A549 (cell line): ENCODE measurements at regions of chr3 and their contacts with region 1.

Region 1: GRCh38 chr3:182683453-182683852 is 109.9 kb upstream of the ATP11B start:
- DNase-seq: peak; percentile 63 to 65
- ATAC-seq: peak; percentile 78 to 88
- H3K4me3 ChIP-seq: peak overlapping the region; percentile 52; the same call in 2 of the 3 replicates
- H3K27ac ChIP-seq: no peak overlapping the region
- H3K4me1 ChIP-seq: peaks cover 4% of the 10 kb centered on the region; the same call in 1 of the 3 replicates
- CTCF ChIP-seq: peak; percentile 81
- EP300 ChIP-seq: no peak
- POLR2A ChIP-seq: no peak
- RAD21 ChIP-seq: peak; percentile 87 to 89

Region 2: DNA sequence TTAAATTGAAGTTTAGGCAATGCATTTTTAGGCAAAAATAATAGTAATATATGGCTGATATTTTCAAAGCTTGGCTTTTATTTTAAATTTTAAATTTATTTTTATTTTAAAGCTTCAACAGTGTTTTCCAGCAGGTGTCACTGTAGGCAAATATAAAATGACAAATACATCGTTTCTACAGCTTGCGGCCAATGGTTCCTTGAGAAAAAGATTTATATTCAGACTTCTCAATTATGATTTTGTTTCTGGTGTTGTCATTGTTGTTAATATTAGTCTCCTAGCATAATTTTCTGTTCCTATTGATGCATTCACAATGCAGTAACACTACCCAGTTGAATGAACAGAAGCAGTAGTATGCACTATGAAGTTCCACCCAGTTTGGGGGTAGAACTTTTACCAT is 1473.2 kb before region 1 on chr3:
- CTCF ChIA-PET with region 1: interaction called, 10 read pairs
- POLR2A ChIA-PET with region 1: no interaction called
- DNase-seq: peak in 1 of 2 experiments; percentile 3
- ATAC-seq: no peak
- H3K4me3 ChIP-seq: no peak overlapping the region
- H3K27ac ChIP-seq: no peak overlapping the region
- H3K4me1 ChIP-seq: no peaks in the 10 kb centered on the region
- CTCF ChIP-seq: peak; percentile 37
- EP300 ChIP-seq: no peak
- POLR2A ChIP-seq: no peak
- RAD21 ChIP-seq: peak; percentile 37 to 53; a peak in 3 of 5 replicates

Region 3: DNA sequence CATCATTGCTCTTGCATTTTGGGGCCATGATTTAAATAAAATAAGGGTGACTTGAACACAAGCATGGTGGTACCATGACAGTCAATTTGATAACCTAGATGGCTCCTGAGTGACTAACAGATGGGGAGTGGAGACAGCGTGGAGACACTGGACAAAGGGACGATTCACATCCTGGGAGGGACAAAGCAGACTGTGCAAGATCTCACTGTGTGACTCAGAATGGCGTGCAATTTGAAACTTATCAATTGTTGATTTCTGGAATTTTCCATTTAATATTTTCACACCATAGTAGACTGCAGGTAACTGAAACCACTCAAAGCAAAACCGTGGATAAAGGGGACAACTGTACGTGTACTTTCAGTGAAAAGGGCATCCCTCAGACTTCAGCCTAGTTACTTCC is 390.4 kb after region 1 on chr3:
- CTCF ChIA-PET with region 1: no interaction called
- POLR2A ChIA-PET with region 1: no interaction called
- DNase-seq: no peak
- ATAC-seq: no peak
- H3K4me3 ChIP-seq: no peak overlapping the region
- H3K27ac ChIP-seq: no peak overlapping the region
- H3K4me1 ChIP-seq: peaks cover 3% of the 10 kb centered on the region; the same call in 1 of the 3 replicates
- CTCF ChIP-seq: no peak
- EP300 ChIP-seq: no peak
- POLR2A ChIP-seq: no peak
- RAD21 ChIP-seq: no peak